ENCODE measurements at regions of chr12 and their contacts with region 1.

Region 1: DNA sequence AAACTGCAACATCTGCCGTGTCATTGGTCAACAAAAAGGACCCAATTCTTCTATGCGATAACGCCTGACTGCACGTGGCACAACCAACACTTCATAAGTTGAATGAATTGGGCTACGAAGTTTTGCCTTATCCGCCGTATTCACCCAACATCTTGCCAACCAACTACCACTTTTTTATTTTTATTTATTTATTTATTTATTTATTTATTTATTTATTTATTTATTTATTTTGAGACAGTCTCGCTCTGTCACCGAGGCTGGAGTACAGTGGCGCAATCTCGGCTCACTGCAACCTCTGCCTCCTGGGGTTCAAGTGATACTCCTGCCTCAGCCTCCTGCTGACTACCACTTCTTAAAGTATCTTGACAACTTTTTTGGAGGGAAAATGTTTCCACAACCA is 127.4 kb downstream of the RASSF9 start:
- DNase-seq: no peak
- H3K4me3 ChIP-seq: no peak overlapping the region
- H3K27ac ChIP-seq: no peak overlapping the region
- H3K4me1 ChIP-seq: no peaks in the 10 kb centered on the region
- H3K27me3 ChIP-seq: no peaks in the 10 kb centered on the region
- CTCF ChIP-seq: no peak
- EP300 ChIP-seq: no peak
- POLR2A ChIP-seq: no peak

Region 2: DNA sequence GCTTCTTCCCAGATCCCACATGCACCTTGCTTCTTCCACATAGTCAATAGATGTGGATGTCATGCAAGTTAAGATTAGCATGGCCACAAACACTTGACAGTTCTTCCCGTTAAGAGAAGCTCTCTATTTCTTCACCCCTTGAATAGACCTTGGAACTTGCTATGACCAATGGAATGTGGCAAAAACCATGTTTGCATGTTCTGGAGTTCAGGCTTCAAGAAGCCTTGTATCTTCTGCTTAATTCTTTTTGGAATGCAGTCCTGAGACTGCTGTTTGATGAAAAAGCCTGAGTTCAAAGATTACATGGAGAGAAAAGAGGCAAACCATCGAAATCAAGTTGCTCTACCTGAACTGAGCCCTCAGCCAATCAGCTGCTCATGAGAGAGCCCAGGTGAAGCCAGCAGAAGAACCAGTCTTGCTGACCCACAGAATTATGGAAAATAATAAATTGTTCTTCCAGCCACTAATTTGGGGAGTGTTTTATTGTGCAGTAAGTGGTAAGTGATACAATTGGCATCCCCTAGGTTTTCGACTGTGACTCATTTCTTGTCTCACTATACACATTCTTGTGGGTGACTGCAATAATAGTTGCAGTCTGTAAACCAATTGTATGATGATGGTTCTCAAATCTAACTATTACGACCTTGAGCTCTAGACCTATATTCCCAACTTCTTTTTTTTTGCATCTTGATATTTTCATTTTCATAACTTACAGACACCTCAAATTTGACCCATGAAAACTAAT is 114.8 kb after region 1 on chr12:
- intact Hi-C with region 1: no loop called
- DNase-seq: no peak
- H3K4me3 ChIP-seq: no peak overlapping the region
- H3K27ac ChIP-seq: no peak overlapping the region
- H3K4me1 ChIP-seq: no peaks in the 10 kb centered on the region
- H3K27me3 ChIP-seq: no peaks in the 10 kb centered on the region
- CTCF ChIP-seq: no peak
- EP300 ChIP-seq: no peak
- POLR2A ChIP-seq: no peak

Region 3: GRCh38 chr12:85963326-85963725 is 254.6 kb after region 1 on chr12:
- intact Hi-C with region 1: loop called in 1 of 4 experiments (anchors 5 kb)
- DNase-seq: no peak
- H3K4me3 ChIP-seq: no peak overlapping the region
- H3K27ac ChIP-seq: no peak overlapping the region
- H3K4me1 ChIP-seq: no peaks in the 10 kb centered on the region
- H3K27me3 ChIP-seq: no peaks in the 10 kb centered on the region
- CTCF ChIP-seq: no peak
- EP300 ChIP-seq: no peak
- POLR2A ChIP-seq: no peak

Region 4: DNA sequence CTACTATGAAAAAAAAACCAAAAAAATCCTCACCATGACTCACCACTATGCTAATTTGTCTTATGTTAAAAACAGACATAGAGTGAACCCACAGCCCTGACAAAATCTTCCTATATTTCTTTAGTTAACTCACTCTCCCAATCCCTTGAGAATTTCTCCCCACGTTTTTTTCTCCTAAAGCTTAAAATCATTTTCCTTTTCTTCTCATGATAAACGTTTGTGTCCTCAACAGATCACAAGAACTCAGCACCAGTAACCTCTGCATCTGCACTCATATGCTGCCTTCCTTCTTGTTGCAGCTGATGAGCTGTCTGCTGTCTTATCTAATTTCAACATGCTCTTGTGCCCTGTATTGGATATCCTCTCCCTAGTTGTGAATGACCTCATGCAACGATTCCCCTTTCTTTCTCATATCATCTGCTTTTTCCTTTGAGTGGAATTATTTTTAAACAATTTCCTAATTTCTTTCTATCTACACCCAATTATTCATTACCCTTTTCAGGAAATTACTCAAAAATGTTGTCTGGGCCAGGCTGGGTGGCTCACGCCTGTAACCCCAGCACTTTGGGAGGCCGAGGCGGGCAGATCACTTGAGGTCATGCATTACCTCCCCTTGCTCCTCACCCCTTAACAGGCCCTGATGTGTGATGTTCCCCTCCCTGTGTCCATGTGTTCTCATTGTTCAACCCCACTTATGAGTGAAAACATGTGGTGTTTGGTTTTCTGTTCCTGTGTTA is 975.0 kb after region 1 on chr12:
- intact Hi-C with region 1: no loop called
- DNase-seq: no peak
- H3K4me3 ChIP-seq: no peak overlapping the region
- H3K27ac ChIP-seq: no peak overlapping the region
- H3K4me1 ChIP-seq: no peaks in the 10 kb centered on the region
- H3K27me3 ChIP-seq: no peaks in the 10 kb centered on the region
- CTCF ChIP-seq: no peak
- EP300 ChIP-seq: no peak
- POLR2A ChIP-seq: no peak